Left ventricle myocardium superior (tissue), 1 donor: ENCODE measurements at regions of chr17 and their contacts with region 1.

Region 1: DNA sequence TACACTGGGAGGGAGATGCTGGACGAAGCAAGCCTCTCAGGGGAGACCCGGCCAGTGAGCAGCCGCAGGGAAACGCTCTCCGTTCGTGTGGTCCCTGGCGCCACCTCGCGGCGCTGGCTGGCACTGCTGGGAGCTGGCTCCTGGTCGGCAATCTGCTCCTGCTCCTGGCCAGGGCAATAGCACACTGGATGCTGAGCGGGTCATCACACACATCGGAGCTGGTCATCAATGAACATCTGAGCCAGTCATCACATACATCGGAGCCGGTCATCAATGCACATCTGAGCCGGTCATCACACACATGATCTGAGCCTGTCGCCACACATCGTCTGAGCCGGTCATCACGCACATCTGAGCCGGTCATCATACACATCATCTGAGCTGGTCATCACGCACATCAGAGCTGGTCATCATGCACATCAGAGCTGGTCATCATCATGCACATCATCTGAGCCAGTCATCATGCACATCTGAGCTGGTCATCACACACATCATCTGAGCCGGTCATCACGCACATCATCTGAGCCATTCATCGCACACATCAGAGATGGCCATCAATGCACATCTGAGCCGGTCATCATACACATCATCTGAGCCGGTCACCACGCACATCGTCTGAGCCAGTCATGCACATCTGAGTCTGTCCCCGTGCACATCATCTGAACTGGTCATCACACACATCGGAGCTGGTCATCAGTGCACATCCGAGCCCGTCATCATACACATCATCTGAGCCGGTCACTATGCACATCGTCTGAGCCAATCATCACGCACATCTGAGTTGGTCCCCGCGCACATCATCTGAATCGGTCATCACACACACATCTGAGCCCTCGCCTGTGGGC is 217.3 kb downstream of the RBFOX3 start:
- DNase-seq: peak; percentile 91
- ATAC-seq: peak; percentile 86

Region 2: DNA sequence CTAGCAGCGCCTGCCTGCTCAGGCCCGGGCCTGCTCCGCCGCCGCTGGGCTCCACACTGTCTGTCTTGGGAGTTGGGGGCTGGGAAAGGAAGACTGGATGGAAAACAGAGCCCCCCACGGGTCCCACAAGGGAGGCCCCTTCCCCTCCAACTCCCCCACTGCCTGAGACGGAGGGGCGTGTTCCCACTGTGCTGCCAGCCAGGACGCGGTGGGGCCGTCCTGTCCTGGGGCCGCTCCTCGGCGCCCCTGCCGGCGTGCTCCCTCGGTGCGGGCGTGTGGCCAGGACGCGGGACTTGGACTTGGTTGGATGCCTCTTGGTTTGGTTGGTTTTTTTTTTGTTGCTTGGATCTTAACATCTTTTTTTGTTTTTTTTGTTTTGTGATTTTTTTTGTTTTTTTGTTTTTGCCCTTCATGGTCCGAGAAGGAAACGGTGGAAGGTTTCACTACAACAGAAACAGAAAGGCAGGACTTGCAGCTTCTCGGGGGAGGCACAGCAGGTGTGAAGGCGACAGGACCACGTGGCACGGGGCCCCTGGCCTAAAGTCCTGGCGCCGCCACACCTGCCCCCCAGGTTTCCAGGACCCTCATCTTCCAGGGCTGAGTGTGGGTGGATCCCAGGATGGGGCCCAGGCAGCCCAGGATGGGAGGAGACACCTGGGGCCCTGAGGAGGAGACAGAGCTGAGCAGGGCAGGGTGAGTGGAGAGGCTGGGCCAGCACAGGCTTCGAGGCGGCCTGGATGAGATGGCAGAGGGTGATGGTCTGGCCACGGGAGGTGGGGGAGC is 302.9 kb before region 1 on chr17:
- intact Hi-C with region 1: loop called (anchors 10 kb)
- DNase-seq: no peak
- ATAC-seq: peak; percentile 22

Region 3: DNA sequence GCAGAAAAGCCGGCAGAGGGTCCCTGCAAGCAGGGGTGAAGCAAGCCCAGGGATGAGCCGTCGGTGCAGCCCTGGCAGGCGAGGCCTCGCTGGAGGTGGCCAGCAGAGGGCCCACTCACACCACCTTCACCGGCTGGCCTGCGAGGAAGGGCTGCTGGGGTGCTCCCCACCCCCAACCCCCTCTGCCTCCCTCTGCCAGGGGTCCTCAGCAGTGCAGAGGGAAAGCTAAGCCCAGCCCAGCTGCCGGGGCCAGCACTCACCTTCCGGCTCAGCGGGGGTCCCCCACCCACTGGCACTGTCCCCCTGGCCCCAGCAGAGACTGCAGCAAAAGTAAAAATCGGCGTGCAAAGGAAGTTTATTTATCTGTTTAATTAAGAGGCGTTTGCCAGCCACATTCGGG is 205.5 kb before region 1 on chr17:
- intact Hi-C with region 1: loop called (anchors 10 kb)
- DNase-seq: peak; percentile 48
- ATAC-seq: peak; percentile 62

Region 4: GRCh38 chr17:79444198-79444597 is 50.6 kb after region 1 on chr17:
- intact Hi-C with region 1: no loop called
- DNase-seq: no peak
- ATAC-seq: no peak